ENCODE measurements at regions of chr1 and their contacts with region 1.

Region 1: DNA sequence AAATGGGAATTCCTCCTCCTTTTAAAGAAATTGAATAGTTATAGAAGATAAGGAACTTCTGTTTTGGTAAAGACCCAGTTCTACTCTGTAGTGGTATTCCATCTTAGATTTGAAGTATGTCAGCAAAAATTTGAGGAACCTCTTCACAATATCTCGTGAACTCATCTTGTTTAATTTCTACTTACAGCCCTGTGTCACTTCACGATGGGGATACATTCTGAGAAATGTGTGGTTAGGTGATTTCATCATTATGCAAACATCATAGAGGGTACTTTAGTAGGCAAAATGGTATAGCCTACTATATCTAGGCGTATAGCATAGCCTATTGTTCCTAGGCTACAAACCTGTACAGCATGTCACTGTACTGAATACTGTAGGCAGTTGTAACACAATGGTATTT is 36.0 kb downstream of the ALG6 start:
- DNase-seq: no peak
- ATAC-seq: peak; percentile 21; the same call in 1 of the 3 replicates
- H3K4me3 ChIP-seq: no peak overlapping the region
- H3K27ac ChIP-seq: no peak overlapping the region
- H3K4me1 ChIP-seq: no peaks in the 10 kb centered on the region
- H3K27me3 ChIP-seq: no peaks in the 10 kb centered on the region
- CTCF ChIP-seq: no peak
- EP300 ChIP-seq: no peak
- POLR2A ChIP-seq: no peak
- RAD21 ChIP-seq: no peak

Region 2: DNA sequence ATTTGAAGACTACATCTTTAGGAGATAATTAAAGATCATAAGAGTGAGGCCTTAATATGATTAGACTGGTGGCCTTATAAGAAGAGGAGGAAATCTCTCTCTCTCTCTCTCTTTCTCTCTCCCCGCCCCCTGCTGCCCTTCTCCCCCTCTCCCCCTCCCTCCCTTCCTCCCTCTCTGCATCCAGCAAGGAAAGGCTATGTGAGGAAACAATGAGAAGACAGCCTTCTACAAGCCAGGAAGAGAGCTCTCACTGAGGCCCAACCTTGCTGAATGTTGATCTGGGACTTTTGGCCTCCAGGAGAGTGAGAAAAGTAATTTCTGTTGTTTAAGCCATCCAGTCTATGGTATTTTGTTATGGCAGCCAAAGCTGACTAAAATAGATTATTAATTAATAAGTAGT is 59.5 kb before region 1 on chr1:
- CTCF ChIA-PET with region 1: no interaction called
- POLR2A ChIA-PET with region 1: no interaction called
- RAD21 ChIA-PET with region 1: no interaction called
- SMC1A ChIA-PET with region 1: interaction called, 3 read pairs
- in situ Hi-C with region 1: no loop called
- intact Hi-C with region 1: loop called (anchors 10 kb)
- DNase-seq: no peak
- ATAC-seq: no peak
- H3K4me3 ChIP-seq: no peak overlapping the region
- H3K27ac ChIP-seq: no peak overlapping the region
- H3K4me1 ChIP-seq: no peaks in the 10 kb centered on the region
- H3K27me3 ChIP-seq: no peaks in the 10 kb centered on the region; a peak in 2 of 4 replicates
- CTCF ChIP-seq: no peak
- EP300 ChIP-seq: no peak
- POLR2A ChIP-seq: no peak
- RAD21 ChIP-seq: no peak

Region 3: DNA sequence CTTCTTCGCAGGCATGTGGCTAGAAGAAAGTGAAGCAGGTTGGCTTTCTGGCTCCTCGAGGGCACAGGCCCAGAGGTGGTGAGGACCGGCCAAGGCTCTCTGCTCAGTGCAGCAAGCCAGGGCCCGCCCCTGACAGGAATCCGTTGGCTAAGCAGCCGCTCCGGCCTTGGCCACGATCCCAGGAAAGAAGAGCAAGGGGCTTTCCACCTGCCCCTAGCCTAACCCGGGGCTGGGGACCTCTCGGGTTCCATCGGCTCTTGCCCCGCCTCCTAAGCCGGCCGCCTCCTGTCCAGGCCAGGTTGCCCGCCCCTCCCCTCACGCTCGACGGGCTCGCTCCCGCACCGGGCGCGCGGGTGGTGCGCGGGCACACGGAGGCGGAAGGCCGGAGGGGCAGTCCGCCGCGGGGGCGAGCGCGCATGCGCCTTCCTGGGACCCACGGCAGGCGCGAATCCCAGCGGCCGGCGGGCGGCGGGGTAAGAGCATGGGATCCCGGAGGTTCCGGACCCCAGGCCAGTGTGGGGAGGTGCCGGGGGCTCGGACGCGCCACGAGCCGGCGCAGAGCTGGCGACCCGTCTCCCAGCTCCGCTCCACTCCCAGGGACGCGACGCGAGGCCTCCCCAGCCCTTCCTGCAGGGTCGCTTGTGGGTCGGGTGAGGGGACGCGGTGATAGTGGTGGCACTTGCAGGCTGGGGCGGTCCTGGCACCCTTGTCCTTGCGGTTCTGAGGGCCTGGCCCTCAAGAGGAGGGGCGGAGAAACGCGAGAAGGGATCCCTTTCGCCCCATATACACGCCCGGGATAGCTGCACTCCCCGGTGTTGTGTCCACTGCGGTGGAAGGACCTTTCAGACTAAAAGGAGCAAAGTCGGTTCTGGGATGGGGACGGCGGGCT is 35.9 kb before region 1 on chr1 and contains the start of gene ALG6:
- CTCF ChIA-PET with region 1: no interaction called
- POLR2A ChIA-PET with region 1: no interaction called
- RAD21 ChIA-PET with region 1: no interaction called
- SMC1A ChIA-PET with region 1: interaction called, 3 read pairs
- in situ Hi-C with region 1: no loop called
- intact Hi-C with region 1: loop called (anchors 5 kb)
- DNase-seq: peak; percentile 60
- ATAC-seq: peak; percentile 95
- H3K4me3 ChIP-seq: peak within 1 kb of the TSS; percentile 97
- H3K27ac ChIP-seq: peak within 1 kb of the TSS; percentile 78
- H3K4me1 ChIP-seq: peaks cover 5% of the 10 kb centered on the region; the same call in 1 of the 2 replicates
- H3K27me3 ChIP-seq: no peaks in the 10 kb centered on the region
- CTCF ChIP-seq: peak in 1 of 3 experiments; percentile 19; a peak in 2 of 6 replicates
- EP300 ChIP-seq: no peak
- POLR2A ChIP-seq: peak; percentile 95
- RAD21 ChIP-seq: no peak
- polyA plus RNA-seq, gene ALG6: 13.8 to 20.2 TPM

Region 4: GRCh38 chr1:63512584-63512983 is 109.2 kb after region 1 on chr1:
- CTCF ChIA-PET with region 1: no interaction called
- POLR2A ChIA-PET with region 1: no interaction called
- RAD21 ChIA-PET with region 1: no interaction called
- SMC1A ChIA-PET with region 1: no interaction called
- in situ Hi-C with region 1: no loop called
- intact Hi-C with region 1: no loop called
- DNase-seq: no peak
- ATAC-seq: no peak
- H3K4me3 ChIP-seq: no peak overlapping the region
- H3K27ac ChIP-seq: no peak overlapping the region
- H3K4me1 ChIP-seq: no peaks in the 10 kb centered on the region
- H3K27me3 ChIP-seq: no peaks in the 10 kb centered on the region
- CTCF ChIP-seq: no peak
- EP300 ChIP-seq: no peak
- POLR2A ChIP-seq: no peak
- RAD21 ChIP-seq: no peak